CD4-positive, alpha-beta memory T cell (primary cell): ENCODE measurements at regions of chr11 and their contacts with region 1.

Region 1: DNA sequence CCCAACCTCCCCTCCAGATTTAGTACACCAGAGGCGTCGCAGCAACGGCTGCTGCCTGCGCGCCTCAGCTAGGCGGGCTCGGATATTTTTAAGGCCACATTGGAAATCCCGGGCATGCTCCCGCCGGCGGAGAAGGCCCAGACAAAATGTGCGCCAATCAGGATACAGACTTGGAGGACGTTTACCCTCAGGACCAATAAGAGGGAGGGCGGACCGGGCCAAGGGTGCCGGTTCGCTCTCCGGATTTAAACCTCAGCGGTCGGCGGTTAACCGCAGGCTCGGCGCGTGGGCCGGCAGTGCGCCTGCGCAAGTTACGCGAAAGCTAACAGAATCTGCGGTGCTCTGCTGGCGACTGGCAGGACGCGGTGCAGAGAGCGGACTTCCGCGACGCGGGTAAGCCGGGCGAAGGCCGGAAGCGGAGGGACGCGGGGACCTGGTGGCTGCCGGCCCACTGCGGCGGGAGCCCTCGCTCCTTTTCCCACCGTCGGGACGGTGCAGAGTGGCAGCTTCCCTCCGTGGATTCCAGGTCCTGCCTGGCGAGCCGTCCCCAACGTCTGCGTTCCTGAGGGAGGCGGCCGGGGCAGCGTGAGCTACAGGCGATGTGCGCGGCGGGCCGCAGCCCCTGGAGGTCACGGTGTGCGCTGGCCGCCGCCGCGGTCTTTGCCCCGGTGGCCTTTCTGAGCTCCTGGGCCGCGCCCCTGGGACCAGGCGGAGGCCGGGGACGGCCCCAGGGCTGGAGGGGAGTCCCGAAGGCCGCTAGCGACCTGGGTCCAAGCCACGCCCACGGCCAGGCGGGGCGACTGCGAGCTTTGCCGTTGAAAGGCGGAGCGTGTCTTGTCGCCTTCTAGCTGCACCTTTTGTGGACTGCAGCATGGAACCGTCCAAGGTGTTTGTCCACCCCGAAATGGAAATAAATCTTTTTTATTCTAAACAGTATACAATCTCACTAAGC is at the start of gene HYLS1:
- DNase-seq: peak; percentile 96 to 99 (median 96)
- H3K4me3 ChIP-seq: peak within 1 kb of the TSS; percentile 67 to 73
- H3K4me3 Mint-ChIP-seq: peak within 1 kb of the TSS; percentile 89 to 99 (median 94)
- H3K27ac ChIP-seq: peak within 1 kb of the TSS; percentile 79
- H3K27ac Mint-ChIP-seq: peak within 1 kb of the TSS; percentile 96 to 99 (median 98)
- H3K4me1 ChIP-seq: peaks cover 33% of the 10 kb centered on the region
- H3K4me1 Mint-ChIP-seq: peaks cover 20 to 45% (median 30%) of the 10 kb centered on the region in 4 donors
- H3K27me3 ChIP-seq: no peaks in the 10 kb centered on the region
- H3K27me3 Mint-ChIP-seq: peaks cover 0 to 6% of the 10 kb centered on the region in 2 donors
- total RNA-seq, gene HYLS1: 8.1 to 8.2 TPM

Region 2: DNA sequence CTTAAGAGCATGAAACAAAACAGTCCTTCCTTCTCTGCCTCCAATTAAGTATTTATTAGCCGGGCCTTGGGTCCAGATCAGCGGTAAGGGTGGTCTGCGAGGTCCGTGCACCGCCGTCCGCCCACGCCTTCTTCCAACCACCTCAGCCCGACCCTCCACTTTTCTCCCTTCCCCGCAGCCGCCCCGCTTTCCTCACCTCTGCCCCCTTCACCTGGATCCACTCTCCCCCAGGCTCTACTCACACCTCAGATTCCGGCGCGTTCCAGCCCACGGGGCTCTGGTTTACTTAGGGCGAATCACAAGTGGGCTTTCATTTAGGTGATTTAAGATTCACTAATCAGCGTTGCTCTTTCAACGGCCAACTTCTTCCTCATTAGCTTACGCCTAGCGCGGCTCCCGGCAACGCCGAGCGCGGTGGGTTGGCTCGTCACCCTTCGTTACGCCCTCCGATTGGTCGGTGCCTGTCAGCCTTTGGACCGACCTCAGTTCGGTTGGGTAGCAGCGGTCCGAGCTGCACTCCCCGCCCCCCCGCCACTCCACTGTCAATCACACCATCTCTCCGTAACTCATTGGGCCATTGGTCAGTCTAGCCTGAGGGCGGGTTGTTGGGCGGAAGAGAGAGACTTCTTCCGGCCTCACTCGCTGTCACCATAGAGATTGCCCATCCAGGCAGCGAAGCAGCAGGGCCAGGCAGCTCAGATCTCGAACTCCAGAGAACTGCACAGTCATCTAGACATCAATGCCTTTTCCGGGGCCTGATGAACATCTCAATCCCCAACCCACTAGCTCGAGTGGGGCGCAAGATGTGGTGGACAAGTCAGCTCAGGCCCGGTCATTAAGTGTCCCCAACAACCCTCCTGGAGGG is 776.1 kb before region 1 on chr11 and contains the start of gene TMEM218:
- CTCF ChIA-PET with region 1: no interaction called
- POLR2A ChIA-PET with region 1: no interaction called
- intact Hi-C with region 1: loop called (anchors 5 kb)
- DNase-seq: peak; percentile 94 to 97 (median 96)
- H3K4me3 ChIP-seq: peak within 1 kb of the TSS; percentile 72 to 89
- H3K4me3 Mint-ChIP-seq: peak within 1 kb of the TSS; percentile 92 to 100 (median 98)
- H3K27ac ChIP-seq: peak within 1 kb of the TSS; percentile 68
- H3K27ac Mint-ChIP-seq: peak within 1 kb of the TSS; percentile 74 to 99 (median 97)
- H3K4me1 ChIP-seq: peaks cover 18% of the 10 kb centered on the region
- H3K4me1 Mint-ChIP-seq: peaks cover 4 to 25% (median 18%) of the 10 kb centered on the region in 4 donors
- H3K27me3 ChIP-seq: no peaks in the 10 kb centered on the region
- H3K27me3 Mint-ChIP-seq: no peaks in the 10 kb centered on the region
- total RNA-seq, gene TMEM218: 15.1 to 16.6 TPM

Region 3: DNA sequence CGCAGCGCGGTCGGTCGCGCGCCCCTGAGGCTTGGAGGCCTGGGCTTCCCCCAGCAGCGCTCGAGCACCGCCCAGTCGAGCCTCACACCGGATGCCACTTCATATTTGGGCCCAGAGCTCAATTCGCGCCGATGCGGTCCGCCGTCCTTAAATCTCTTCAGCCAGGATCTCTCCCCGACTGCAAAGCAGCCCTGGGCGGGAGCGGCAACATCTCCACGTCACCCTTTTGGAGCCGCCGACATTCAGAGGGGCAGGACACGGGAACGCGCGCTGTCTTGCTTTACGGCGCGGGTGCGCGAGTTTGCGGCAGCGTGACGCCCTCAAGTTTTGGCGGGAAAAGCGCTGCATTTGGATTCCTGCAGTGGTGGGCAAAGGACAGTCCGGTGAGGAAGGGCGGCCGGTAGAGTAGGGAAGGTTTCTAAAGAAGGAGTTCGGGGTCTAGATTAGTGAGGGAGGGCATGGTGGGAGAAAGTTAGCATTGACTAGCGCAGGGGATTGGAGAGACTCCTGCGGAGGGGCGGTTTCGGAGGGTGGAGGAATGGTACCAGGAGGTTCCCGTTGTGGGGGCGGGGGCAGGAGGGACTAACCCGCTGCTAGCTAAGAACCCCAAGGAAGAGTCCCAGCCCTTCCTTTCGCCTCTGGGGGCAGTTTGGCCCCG is 261.9 kb before region 1 on chr11:
- CTCF ChIA-PET with region 1: interaction called, 6 read pairs
- POLR2A ChIA-PET with region 1: interaction called, 16 read pairs
- intact Hi-C with region 1: loop called (anchors 1 kb)
- DNase-seq: peak; percentile 81 to 88 (median 85)
- H3K4me3 ChIP-seq: peak overlapping the region; percentile 84 to 98
- H3K4me3 Mint-ChIP-seq: peak overlapping the region; percentile 93 to 100 (median 98)
- H3K27ac ChIP-seq: peak overlapping the region; percentile 95
- H3K27ac Mint-ChIP-seq: peak overlapping the region; percentile 87 to 99 (median 99)
- H3K4me1 ChIP-seq: peaks cover 19% of the 10 kb centered on the region
- H3K4me1 Mint-ChIP-seq: peaks cover 11 to 29% (median 16%) of the 10 kb centered on the region in 4 donors
- H3K27me3 ChIP-seq: no peaks in the 10 kb centered on the region
- H3K27me3 Mint-ChIP-seq: no peaks in the 10 kb centered on the region

Region 4: DNA sequence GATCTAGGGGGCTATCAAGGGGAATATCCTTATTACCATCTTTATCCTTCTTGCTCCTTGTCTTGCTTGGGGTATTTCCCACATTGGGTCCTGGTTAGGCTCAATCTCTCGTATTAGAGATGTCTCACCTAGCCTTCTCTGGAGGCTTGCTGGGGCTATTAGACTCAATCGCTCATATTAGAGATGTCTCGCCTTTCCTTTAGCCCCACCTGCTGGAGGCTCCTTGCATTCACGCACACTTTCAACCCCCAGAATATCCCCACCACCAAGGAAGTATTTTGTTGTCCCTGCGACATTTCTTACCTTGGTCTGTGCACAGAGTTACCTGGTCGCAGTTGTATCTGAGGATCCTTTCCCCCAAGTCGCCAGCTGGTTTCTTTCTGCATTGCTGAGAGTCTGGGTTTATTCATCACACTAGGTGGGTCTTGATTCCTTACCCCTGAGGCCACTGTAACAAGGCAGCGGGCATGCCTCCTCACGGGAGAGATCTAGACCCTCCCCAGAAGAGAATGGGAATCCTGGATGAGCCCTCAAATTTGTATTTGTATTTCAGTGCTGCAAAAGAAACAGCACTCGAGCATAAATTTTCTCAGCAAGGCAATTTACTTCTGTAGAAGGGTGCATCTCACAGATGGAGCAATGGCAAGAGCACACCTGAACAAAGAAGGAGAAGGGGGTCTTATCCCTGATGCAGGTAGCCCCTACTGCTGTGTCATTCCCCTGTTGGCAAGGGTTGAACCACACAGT is 16.1 kb before region 1 on chr11:
- CTCF ChIA-PET with region 1: no interaction called
- POLR2A ChIA-PET with region 1: no interaction called
- intact Hi-C with region 1: no loop called
- DNase-seq: peak in 3 of 5 donors; percentile 17 to 25 (median 17)
- H3K4me3 ChIP-seq: no peak overlapping the region
- H3K4me3 Mint-ChIP-seq: no peak overlapping the region
- H3K27ac ChIP-seq: no peak overlapping the region
- H3K27ac Mint-ChIP-seq: peak overlapping the region in 1 of 7 donors; percentile 82
- H3K4me1 ChIP-seq: no peaks in the 10 kb centered on the region
- H3K4me1 Mint-ChIP-seq: peaks cover 0 to 3% (median 1%) of the 10 kb centered on the region in 4 donors
- H3K27me3 ChIP-seq: no peaks in the 10 kb centered on the region
- H3K27me3 Mint-ChIP-seq: peaks cover 2 to 3% of the 10 kb centered on the region in 2 donors

Region 5: GRCh38 chr11:126007238-126007637 is 119.6 kb after region 1 on chr11:
- CTCF ChIA-PET with region 1: no interaction called
- POLR2A ChIA-PET with region 1: no interaction called
- intact Hi-C with region 1: no loop called
- DNase-seq: no peak
- H3K4me3 ChIP-seq: no peak overlapping the region
- H3K4me3 Mint-ChIP-seq: no peak overlapping the region
- H3K27ac ChIP-seq: no peak overlapping the region
- H3K27ac Mint-ChIP-seq: no peak overlapping the region
- H3K4me1 ChIP-seq: no peaks in the 10 kb centered on the region
- H3K4me1 Mint-ChIP-seq: peaks cover 0 to 2% (median 0%) of the 10 kb centered on the region in 4 donors
- H3K27me3 ChIP-seq: no peaks in the 10 kb centered on the region
- H3K27me3 Mint-ChIP-seq: no peaks in the 10 kb centered on the region

Region 6: DNA sequence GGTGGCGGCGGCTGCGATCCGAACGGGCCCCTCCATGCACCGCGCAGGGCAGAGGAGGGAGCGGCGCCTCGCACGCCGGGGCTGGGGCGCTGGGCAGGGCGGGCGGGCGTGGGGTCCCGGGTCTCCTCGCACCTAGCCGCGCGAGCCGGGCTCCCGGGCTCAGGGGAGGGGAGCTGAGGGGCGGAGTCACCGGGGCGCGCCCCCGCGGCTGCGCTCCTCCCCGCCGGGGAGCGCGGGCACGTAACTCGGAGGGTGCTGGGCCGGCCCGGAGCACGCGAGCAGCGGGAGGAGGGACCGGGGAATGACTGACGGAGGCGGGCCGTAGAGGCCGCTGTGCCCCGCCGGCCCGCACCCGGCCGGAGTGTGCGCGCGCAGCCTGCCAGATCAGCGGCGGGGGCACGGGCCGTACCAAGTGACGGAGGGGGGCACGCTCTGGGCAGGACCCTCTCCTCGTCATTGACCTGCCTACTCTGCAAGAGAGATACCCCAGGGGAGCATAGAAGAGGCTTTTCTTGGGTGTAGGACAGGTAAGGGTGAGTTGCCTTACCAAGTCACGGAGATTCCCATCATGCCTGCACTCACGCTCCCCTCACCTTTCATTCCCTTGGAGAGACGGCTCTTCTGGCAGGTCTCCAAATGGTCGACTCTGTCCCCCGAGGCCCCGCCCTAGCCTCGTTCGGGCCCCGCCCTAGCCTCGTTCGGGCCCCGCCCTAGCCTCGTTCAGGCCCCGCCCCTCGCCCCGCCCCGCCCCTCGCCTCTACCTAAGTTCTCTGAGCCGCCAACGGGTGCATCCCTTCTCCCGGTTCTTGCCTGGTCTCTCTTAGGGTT is 175.2 kb after region 1 on chr11 and contains the start of gene CDON:
- CTCF ChIA-PET with region 1: interaction called, 4 read pairs
- POLR2A ChIA-PET with region 1: interaction called, 7 read pairs
- intact Hi-C with region 1: loop called (anchors 2 kb)
- DNase-seq: peak; percentile 88 to 95 (median 93)
- H3K4me3 ChIP-seq: peak within 1 kb of the TSS; percentile 47 to 76
- H3K4me3 Mint-ChIP-seq: peak within 1 kb of the TSS; percentile 86 to 96 (median 90)
- H3K27ac ChIP-seq: peak within 1 kb of the TSS; percentile 73
- H3K27ac Mint-ChIP-seq: peak within 1 kb of the TSS; percentile 84 to 99 (median 96)
- H3K4me1 ChIP-seq: peaks cover 14% of the 10 kb centered on the region
- H3K4me1 Mint-ChIP-seq: peaks cover 5 to 14% (median 9%) of the 10 kb centered on the region in 4 donors
- H3K27me3 ChIP-seq: no peaks in the 10 kb centered on the region
- H3K27me3 Mint-ChIP-seq: peaks cover 0 to 2% of the 10 kb centered on the region in 2 donors
- total RNA-seq, gene CDON: 2.7 to 3.1 TPM